ENCODE measurements at regions of chr1 and their contacts with region 1.

Region 1: GRCh38 chr1:227946624-227947385 is 927 bp downstream of the WNT9A start:
- H3K4me3 Mint-ChIP-seq: peak overlapping the region; percentile 35
- H3K27ac Mint-ChIP-seq: no peak overlapping the region
- H3K4me1 Mint-ChIP-seq: peaks cover 6% of the 10 kb centered on the region
- H3K27me3 Mint-ChIP-seq: peaks cover 53% of the 10 kb centered on the region

Region 2: GRCh38 chr1:227762233-227762911 is 184.4 kb before region 1 on chr1:
- intact Hi-C with region 1: loop called (anchors 1 kb)
- H3K4me3 Mint-ChIP-seq: no peak overlapping the region
- H3K27ac Mint-ChIP-seq: no peak overlapping the region
- H3K4me1 Mint-ChIP-seq: peaks cover 37% of the 10 kb centered on the region
- H3K27me3 Mint-ChIP-seq: no peaks in the 10 kb centered on the region

Region 3: DNA sequence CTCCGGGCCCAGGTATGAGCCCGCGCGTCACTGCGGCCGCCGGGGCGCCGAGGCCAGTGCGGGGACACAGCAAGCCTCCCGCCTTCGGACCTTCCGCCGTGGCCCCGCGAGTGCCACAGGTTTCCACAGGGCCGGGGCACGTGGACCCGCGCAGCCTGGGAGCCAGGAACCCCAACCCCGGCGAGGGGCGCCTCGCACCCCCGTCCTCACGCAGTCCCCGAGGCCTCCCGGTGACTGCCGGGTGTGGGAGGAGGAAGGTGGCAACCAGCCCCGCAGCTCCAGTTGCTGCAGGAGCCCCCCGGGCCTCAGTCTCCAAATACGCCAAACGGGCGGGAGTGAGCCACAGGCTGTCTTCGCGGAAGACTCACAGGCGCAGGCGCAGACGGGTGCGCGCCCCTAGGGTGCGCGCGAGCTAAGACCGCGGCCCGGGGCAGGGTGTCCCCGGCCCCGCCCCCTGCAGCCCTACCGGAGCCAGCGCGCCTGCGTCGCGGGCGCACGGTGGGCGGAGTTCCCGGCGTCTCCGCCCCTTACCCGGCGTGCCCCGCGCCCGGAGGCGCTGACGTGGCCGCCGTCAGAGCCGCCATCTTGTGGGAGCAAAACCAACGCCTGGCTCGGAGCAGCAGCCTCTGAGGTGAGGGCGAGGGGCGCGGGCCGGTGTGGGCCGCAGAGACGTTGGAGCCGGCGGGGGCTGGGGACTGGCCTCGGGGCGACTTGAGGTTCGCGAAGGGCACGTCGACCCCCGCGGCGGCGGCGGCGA is 135.5 kb after region 1 on chr1 and contains the start of gene ARF1:
- intact Hi-C with region 1: no loop called
- H3K4me3 Mint-ChIP-seq: peak within 1 kb of the TSS; percentile 92
- H3K27ac Mint-ChIP-seq: peak within 1 kb of the TSS; percentile 96
- H3K4me1 Mint-ChIP-seq: peaks cover 61% of the 10 kb centered on the region
- H3K27me3 Mint-ChIP-seq: peaks cover 2% of the 10 kb centered on the region